Heart right ventricle (tissue), 16 donors: ENCODE measurements at regions of chr6 and their contacts with region 1.

Region 1: GRCh38 chr6:3052481-3053230 is 15.6 kb upstream of the RIPK1 start:
- DNase-seq: no peak
- ATAC-seq: no peak
- H3K4me3 ChIP-seq: peak overlapping the region in 3 of 10 donors; percentile 56 to 65 (median 58)
- H3K27ac ChIP-seq: peak overlapping the region in 1 of 10 donors; percentile 88
- H3K4me1 ChIP-seq: peaks cover 0 to 32% (median 19%) of the 10 kb centered on the region in 9 donors
- H3K27me3 ChIP-seq: no peaks in the 10 kb centered on the region
- CTCF ChIP-seq: no peak

Region 2: DNA sequence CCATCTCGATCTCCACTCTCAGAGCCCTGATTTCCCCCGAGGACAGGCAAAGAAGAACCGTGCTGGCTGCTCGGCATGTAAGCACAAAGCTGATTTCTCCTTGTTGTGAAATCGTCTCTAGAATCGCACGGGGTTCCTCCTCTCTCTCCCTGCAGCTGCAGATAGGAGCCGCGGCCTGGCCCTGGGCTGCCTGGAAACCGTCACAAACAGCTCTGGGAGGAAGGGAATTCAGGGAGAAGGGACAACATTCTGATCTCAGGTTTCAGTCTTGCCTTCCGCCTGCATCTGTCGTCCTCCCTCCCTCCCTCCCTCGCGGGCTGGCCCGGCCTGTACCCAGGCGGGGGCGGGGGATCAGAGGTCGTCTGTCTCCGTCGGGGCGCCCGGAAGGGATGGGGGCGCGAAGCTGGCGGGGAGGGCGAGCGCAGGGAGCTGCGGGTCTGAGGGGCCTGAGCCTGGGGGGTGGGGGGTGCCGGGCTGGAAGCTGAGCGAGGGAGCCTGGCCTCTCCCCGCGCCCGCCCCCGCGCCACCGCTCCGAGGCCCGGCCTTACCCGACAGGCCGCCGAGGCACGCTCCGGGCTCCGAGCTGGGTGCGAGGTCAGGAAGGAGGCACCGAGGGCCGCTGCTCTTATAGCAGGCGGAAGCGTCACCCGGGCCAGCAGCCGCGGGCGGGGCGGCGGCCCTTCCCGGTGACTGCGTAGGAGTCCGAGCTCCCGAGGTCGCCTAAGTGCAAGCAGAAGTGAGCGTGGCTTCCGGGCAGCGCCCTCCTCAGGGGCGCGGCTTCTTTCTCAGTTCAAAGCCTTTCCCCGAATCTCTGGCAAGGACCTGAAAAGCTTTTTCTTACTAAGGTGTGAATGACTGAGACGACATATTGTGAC is 211.2 kb before region 1 on chr6 and contains the start of gene SERPINB1:
- intact Hi-C with region 1: loop called in 6 of 10 experiments (anchors 5 to 10 kb)
- DNase-seq: peak; percentile 90 to 92
- ATAC-seq: peak; percentile 87 to 95 (median 93)
- H3K4me3 ChIP-seq: peak within 1 kb of the TSS; percentile 29 to 73 (median 66)
- H3K27ac ChIP-seq: peak within 1 kb of the TSS; percentile 95 to 99 (median 97)
- H3K4me1 ChIP-seq: peaks cover 13 to 76% (median 35%) of the 10 kb centered on the region in 9 donors
- H3K27me3 ChIP-seq: no peaks in the 10 kb centered on the region
- CTCF ChIP-seq: peak in 3 of 9 donors; percentile 41 to 50 (median 43)
- total RNA-seq, gene SERPINB1: 17.7 to 73.7 (median 22.5) TPM

Region 3: DNA sequence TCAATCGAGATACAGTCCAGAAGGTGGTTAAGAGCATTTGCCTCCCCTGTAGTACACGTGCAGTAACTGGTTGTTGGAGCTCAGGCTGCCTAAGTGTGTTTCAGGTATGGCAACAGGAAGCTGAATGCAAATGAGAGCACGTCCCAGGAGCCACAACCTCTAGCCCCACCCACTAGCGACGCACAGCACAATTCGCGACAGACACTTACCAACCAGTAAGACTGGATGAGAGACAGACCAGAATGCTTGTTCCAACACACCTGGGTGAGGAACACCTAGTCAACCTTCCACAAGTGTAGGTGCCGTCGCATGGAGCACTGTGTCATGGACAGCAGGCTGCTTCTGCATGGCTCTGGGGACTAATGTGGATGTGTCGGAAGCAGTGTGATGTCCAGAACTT is 203.8 kb before region 1 on chr6:
- intact Hi-C with region 1: loop called in 7 of 10 experiments (anchors 5 to 10 kb)
- DNase-seq: no peak
- ATAC-seq: no peak
- H3K4me3 ChIP-seq: no peak overlapping the region
- H3K27ac ChIP-seq: no peak overlapping the region
- H3K4me1 ChIP-seq: peaks cover 6 to 34% (median 22%) of the 10 kb centered on the region in 9 donors
- H3K27me3 ChIP-seq: no peaks in the 10 kb centered on the region
- CTCF ChIP-seq: no peak

Region 4: DNA sequence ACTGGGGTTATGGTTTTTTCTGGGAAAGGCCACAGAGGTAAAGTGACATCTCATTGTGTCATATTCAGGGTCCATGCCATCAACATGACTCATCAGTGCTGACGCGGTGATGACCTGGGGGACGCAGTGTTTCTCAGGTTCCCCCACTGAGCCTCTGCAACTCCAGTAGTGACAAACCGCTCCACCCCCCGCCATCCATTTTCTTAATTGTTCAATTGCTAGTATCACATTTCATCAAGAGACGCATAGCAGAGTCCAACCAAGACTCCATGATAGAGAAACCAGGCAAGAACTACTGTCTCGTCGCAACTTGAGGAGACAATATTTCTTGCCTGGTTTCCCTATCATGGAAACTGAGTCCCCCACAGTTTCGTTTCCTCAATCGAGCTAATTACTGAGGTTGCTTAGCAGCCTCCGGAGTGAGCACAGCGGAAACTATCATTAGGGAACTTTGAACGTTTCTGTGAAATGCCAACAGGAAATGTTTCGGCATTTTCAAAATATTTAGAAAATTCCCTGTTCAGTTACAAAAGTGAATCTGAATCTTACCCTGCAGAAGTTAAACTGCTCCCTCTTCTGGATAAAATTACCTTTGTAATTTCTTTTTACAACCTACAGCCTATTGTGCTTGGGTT is 198.8 kb before region 1 on chr6:
- intact Hi-C with region 1: loop called in 6 of 10 experiments (anchors 5 to 10 kb)
- DNase-seq: no peak
- ATAC-seq: peak in 7 of 8 donors; percentile 21 to 44 (median 35)
- H3K4me3 ChIP-seq: peak overlapping the region in 9 of 10 donors; percentile 7 to 52 (median 40)
- H3K27ac ChIP-seq: peak overlapping the region; percentile 57 to 95 (median 78)
- H3K4me1 ChIP-seq: peaks cover 14 to 71% (median 49%) of the 10 kb centered on the region in 9 donors
- H3K27me3 ChIP-seq: no peaks in the 10 kb centered on the region
- CTCF ChIP-seq: peak in 6 of 9 donors; percentile 36 to 65 (median 56)

Region 5: GRCh38 chr6:2999618-3000557 is 52.8 kb before region 1 on chr6 and contains the start of gene NQO2:
- intact Hi-C with region 1: loop called in 9 of 10 experiments (anchors 1 to 2 kb)
- DNase-seq: peak; percentile 91 to 97
- ATAC-seq: peak; percentile 93 to 96 (median 94)
- H3K4me3 ChIP-seq: peak within 1 kb of the TSS; percentile 74 to 93 (median 84)
- H3K27ac ChIP-seq: peak within 1 kb of the TSS; percentile 73 to 95 (median 92)
- H3K4me1 ChIP-seq: peaks cover 0 to 45% (median 26%) of the 10 kb centered on the region in 9 donors
- H3K27me3 ChIP-seq: no peaks in the 10 kb centered on the region
- CTCF ChIP-seq: peak in 2 of 9 donors; percentile 6 to 18
- total RNA-seq, gene NQO2: 29.5 to 88.4 (median 48.2) TPM

Region 6: DNA sequence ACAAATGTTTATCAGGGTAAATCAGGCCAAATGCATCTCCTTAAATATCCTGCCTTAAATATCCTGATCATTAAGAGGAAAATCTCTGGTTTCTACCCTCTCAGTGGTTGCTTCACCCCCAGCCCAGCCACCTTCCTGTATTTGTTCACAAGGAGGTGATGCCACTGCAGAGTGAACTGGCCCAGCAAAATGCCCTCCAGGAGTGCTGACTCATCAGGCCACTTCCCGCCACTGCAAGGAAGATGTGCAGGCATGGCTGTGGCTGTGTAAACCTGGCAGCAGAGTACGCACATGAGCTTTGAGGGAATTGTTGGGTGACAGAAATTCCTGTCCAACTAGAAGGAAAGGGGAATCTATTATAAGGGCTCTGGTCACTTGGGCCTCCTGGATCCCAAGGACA is 39.2 kb before region 1 on chr6:
- intact Hi-C with region 1: loop called in 1 of 10 experiments (anchors 5 kb)
- DNase-seq: peak in 1 of 2 donors; percentile 31
- ATAC-seq: peak in 3 of 8 donors; percentile 37 to 67 (median 53)
- H3K4me3 ChIP-seq: no peak overlapping the region
- H3K27ac ChIP-seq: peak overlapping the region in 1 of 10 donors; percentile 45
- H3K4me1 ChIP-seq: peaks cover 0 to 7% (median 0%) of the 10 kb centered on the region in 9 donors
- H3K27me3 ChIP-seq: no peaks in the 10 kb centered on the region
- CTCF ChIP-seq: no peak

Region 7: GRCh38 chr6:3023663-3024483 is 28.8 kb before region 1 on chr6:
- intact Hi-C with region 1: loop called in 3 of 10 experiments (anchors 1 to 5 kb)
- DNase-seq: peak; percentile 94 to 95
- ATAC-seq: peak; percentile 96 to 98 (median 97)
- H3K4me3 ChIP-seq: peak overlapping the region; percentile 34 to 67 (median 56)
- H3K27ac ChIP-seq: peak overlapping the region; percentile 73 to 96 (median 91)
- H3K4me1 ChIP-seq: peaks cover 0 to 64% (median 26%) of the 10 kb centered on the region in 9 donors
- H3K27me3 ChIP-seq: no peaks in the 10 kb centered on the region
- CTCF ChIP-seq: no peak

Region 8: GRCh38 chr6:3176562-3177355 is 124.1 kb after region 1 on chr6:
- intact Hi-C with region 1: no loop called
- DNase-seq: no peak
- ATAC-seq: peak in 6 of 8 donors; percentile 46 to 87 (median 63)
- H3K4me3 ChIP-seq: no peak overlapping the region
- H3K27ac ChIP-seq: no peak overlapping the region
- H3K4me1 ChIP-seq: no peaks in the 10 kb centered on the region
- H3K27me3 ChIP-seq: peaks cover 0 to 4% (median 0%) of the 10 kb centered on the region in 7 donors
- CTCF ChIP-seq: no peak